Heart right ventricle (tissue), 16 donors: ENCODE measurements at regions of chr7 and their contacts with region 1.

Region 1: DNA sequence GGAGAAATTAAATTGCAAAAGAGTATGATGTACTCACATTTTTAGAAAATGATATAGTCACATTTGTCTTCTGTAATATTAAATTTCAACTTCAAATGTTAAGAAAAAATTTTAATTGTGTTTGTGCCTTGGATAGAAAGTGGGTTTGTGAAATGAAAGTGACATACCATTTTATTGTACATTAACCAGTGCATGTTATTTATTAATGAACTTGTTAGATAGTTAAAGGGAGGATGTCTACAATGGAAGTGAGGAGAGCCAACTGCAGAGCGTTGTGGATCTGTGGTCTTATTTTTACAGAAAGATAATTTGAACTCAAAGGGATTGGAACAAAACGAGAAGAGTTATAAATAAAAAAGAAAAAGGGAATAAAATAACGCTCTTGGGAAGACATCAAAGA is 291.7 kb downstream of the ARL4A start:
- DNase-seq: no peak
- ATAC-seq: no peak
- H3K4me3 ChIP-seq: no peak overlapping the region
- H3K27ac ChIP-seq: no peak overlapping the region
- H3K4me1 ChIP-seq: no peaks in the 10 kb centered on the region
- H3K27me3 ChIP-seq: no peaks in the 10 kb centered on the region
- CTCF ChIP-seq: no peak

Region 2: GRCh38 chr7:12821746-12822145 is 157.4 kb before region 1 on chr7:
- intact Hi-C with region 1: no loop called
- DNase-seq: no peak
- ATAC-seq: no peak
- H3K4me3 ChIP-seq: no peak overlapping the region
- H3K27ac ChIP-seq: no peak overlapping the region
- H3K4me1 ChIP-seq: no peaks in the 10 kb centered on the region
- H3K27me3 ChIP-seq: no peaks in the 10 kb centered on the region
- CTCF ChIP-seq: no peak

Region 3: DNA sequence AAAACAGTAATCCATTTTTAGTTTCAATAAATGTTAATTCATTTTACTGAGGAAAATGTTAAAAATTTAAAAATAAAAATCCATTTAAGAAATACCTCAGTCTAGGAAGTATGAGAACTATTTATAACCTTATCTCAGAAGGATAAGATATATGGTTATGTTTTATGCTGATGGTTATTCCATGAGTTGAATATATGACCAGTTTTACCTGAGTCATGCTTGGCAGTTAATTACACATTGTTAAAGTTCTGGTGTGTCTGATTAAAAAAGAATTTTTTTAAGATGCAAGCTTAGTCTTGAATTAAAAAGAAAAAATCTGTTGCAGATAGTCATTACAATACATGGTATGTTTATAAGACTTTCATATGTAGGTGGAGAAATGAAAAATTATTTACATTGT is 100.0 kb before region 1 on chr7:
- intact Hi-C with region 1: loop called in 1 of 10 experiments (anchors 10 kb)
- DNase-seq: no peak
- ATAC-seq: no peak
- H3K4me3 ChIP-seq: no peak overlapping the region
- H3K27ac ChIP-seq: no peak overlapping the region
- H3K4me1 ChIP-seq: no peaks in the 10 kb centered on the region
- H3K27me3 ChIP-seq: no peaks in the 10 kb centered on the region
- CTCF ChIP-seq: no peak